Right ventricle myocardium superior (tissue), 1 donor: ENCODE measurements at regions of chr9 and their contacts with region 1.

Region 1: GRCh38 chr9:69190086-69190862 is 16.2 kb downstream of the TJP2 start:
- DNase-seq: no peak
- ATAC-seq: no peak

Region 2: GRCh38 chr9:69047371-69047770 is 142.9 kb before region 1 on chr9:
- intact Hi-C with region 1: loop called (anchors 2 kb)
- DNase-seq: no peak
- ATAC-seq: peak; percentile 9

Region 3: DNA sequence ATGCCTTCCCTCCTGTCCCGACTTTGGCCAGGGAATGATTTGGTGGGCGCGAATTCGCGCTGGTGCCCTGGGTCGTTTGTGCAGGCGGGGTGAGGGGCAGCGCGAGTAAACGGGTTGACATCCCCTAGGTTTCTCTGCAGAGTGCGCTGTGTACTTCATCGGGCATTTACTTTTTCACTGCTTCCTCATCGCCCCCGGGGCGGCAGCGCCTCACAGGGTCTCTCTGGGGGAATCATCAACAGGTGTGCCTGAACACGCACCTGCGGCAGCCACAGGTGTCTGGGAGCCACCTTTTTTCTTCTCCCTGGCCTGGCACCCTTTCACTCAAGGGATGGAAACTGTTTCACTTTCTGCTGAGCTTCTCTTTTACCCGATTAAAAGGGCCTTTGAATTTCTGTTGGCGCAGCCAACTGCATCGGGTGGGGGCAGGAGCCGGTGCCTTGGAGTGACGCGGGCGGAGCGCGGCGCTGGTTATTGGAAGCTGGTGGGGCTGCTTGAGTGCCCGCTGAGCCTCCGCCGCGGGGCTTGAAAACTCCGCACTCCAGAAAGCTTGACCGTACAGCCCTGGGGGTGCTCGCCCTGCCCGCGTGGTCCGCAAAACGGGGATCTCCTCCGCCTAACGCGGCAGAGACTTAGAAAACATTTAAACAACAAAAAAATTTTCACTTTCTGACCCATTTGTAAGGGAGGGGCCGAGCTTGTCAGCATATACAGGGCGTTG is 68.3 kb before region 1 on chr9:
- intact Hi-C with region 1: loop called (anchors 5 kb)
- DNase-seq: peak; percentile 85
- ATAC-seq: peak; percentile 90